HEK293T (cell line): ENCODE measurements at regions of chr13 and their contacts with region 1.

Region 1: GRCh38 chr13:31424117-31424729 is 224.4 kb downstream of the B3GLCT start:
- DNase-seq: peak; percentile 83

Region 2: DNA sequence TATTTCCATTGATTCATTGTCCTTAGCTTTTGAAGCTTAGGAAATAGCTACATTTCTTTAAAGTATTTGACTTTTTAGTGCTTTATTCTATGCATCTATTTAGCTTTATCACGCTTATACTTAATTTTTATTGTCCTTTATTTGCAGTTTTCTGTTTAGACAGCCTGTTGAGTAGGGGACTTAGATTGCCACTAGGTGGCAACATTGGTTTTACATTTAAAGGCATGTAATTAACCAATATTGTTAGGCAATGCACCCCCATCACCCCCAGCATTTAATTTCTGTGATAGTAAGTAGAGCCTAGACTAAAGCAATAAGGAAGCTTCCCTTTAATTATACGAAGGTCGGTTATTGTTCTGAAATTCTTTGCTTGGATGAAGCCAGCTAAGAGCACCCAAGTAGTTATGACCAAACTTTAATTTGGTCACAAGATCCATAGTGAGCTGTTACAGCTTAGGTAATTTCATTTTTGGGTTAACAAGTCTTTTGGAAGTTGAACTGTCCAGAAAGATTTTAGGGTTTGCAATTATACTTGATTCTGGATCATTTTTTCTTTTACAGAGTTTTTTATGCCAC is 187.9 kb before region 1 on chr13:
- CTCF ChIA-PET with region 1: interaction called, 15 read pairs
- POLR2A ChIA-PET with region 1: no interaction called
- DNase-seq: peak; percentile 23

Region 3: DNA sequence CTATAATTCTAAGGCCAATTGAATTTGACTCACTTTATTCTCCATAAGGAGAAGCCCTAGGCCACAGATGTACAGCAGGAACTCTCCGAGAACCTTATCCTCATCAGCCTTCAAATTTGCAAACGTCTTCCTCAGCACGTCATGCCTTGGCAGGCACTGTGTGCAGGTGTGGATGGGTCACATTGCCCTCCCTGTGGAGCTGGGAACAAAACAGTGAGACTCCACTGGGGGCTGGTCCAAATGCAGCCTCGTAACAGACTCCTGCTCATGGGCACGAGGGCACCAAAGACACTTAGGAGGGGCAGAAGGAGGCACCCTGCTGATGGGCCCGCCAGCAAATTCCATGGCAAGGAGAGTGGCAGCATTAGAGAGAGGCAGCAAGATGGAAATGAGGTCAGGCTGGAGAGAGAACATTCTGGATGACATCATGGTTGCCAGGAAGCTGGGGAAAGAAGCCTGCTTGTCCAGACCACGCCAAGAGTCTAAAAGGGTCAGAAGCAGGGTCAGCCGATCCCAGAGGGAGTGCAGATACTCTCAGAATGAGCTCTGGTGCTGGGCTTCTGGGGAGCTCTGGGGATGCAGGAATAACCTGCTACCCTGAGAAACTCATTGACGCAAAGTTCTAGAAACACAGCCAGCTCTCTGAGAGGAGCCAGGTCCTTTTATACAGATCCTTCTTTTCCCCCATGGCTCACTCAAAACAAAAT is 17.7 kb after region 1 on chr13:
- CTCF ChIA-PET with region 1: no interaction called
- POLR2A ChIA-PET with region 1: no interaction called
- DNase-seq: no peak

Region 4: DNA sequence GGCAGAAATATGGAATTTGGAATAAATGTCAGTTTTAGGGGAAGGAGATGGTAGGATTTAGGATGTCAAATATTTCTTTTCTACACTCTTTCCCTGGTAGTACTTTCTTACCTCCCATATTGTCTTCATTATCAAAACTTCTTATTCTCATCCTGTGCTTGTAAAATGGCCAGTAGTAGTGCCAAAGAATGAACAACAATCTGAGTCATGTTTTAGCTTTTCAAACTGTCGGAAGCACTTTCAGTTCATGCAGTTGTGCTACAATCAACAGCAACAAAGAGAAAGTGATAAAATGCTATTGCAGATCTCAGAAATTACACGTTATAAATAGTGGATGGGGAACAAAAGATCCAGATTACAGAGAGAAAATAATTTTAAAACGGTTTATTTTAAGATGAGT is 121.4 kb after region 1 on chr13:
- CTCF ChIA-PET with region 1: no interaction called
- POLR2A ChIA-PET with region 1: no interaction called
- DNase-seq: no peak

Region 5: DNA sequence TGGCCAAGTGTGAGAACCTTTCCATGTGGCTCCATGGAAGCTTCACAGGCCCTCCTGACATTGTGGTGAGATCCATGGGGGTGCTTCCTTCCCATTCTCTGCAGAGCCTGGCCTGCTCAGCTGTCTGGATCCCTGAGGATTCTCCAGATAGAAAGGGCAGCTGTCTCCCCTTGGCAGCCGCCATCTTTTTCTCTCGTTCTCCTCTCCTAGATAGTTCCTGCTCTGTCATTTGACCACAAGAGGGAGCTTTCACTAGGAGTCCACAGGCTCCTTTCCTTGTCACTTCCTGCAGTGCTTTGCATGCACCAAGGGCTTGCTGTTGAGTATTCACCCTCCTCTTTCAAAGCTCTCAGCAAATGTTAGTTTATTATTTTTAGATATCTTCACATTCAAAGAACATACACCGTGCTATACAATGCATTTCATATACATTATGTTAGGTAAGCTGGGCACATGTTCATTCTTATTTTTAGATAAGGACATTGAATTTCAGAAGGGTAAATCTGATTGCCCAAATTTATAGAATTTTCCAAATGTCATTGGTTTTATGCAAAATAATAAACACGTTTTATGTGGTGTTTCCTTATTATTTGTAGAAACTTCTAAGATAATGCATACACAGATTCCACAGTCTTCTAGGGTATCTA is 740.5 kb after region 1 on chr13:
- CTCF ChIA-PET with region 1: no interaction called
- POLR2A ChIA-PET with region 1: no interaction called
- DNase-seq: peak; percentile 77